ENCODE measurements at regions of chr16 and their contacts with region 1.

Region 1: DNA sequence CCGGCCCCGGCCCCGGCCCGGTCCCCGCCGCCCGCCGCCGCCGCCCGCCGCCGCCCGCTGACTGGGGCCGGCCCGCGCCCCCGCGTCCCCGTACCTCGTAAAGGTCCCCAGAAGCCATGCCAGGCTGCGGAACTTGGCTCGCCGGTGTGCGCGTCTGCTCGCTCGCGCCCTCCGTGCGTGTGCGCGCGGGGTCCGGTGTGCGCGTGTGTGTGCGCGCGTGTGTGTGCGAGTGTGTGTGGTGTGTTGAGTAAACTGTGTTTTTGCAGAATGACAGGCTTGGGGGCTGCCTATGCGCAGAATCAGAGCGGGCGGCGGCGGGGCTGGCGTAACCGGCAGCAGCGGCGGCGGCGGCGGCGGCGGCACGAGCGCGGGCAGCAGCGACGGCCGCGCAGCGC is 345 bp downstream of the CDYL2 start:
- DNase-seq: no peak
- ATAC-seq: no peak
- H3K4me3 ChIP-seq: peak overlapping the region; percentile 47 to 57 (median 54)
- H3K27ac ChIP-seq: no peak overlapping the region
- H3K4me1 ChIP-seq: no peaks in the 10 kb centered on the region
- H3K27me3 ChIP-seq: peaks cover 0 to 17% (median 0%) of the 10 kb centered on the region in 3 donors
- CTCF ChIP-seq: no peak
- POLR2A ChIP-seq: no peak

Region 2: DNA sequence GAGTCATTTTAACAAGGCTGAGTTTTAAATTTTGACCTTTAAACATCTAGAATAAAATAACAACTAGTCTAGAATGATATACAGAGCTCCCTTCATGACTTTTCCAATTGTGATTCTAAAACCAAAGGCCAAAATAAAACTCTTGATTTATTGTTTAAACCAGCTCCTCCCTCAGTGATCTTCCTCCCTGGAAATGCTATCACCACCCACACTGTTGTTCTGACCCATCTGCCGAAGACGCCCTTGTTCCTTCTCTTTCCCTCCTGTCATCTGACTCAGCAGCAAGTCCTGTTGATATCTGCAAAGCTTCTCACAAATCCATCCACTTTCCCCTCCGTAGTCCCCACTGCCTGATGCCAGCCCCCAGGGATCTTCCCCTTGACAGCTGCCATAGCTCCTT is 494.9 kb before region 1 on chr16:
- in situ Hi-C with region 1: no loop called
- intact Hi-C with region 1: no loop called
- DNase-seq: no peak
- ATAC-seq: no peak
- H3K4me3 ChIP-seq: no peak overlapping the region
- H3K27ac ChIP-seq: no peak overlapping the region
- H3K4me1 ChIP-seq: no peaks in the 10 kb centered on the region
- H3K27me3 ChIP-seq: no peaks in the 10 kb centered on the region
- CTCF ChIP-seq: no peak
- POLR2A ChIP-seq: no peak

Region 3: DNA sequence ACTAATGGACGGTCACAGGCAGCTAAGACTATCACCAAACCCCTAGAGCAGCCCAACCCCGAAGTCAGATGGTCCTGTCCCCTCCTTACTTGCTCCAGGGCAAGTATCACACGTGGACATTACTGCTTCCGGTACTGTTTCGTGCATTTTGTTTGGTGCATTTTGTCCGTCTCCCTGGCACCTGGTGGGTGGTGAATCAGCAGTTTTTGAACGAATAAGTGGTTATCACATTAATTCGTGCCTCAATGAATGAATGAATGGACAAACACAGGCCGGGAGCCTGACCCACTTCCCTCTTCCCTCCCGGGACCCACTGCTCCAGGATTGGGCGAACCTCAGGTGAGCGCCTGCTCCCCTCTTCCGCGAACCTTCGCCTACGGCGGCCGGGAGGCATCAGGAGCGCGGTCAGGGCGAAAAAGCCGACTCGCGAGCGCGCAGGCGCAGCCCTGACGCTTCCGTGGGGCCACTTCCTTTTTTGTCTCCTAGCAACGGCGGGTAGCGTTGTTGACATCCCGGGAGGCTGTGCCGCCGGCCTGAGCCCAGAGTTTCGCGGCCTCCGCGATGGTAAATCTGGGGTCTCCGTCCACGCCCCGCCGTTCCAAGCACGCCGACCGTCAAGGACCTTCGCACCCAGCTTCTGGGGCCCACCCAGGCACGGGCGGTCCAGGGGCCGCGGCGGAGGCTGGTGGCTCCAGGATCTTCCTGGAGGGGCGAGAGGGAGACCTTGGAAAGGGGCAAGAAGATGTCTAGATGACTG is 263.4 kb before region 1 on chr16 and contains the start of gene DYNLRB2:
- in situ Hi-C with region 1: no loop called
- intact Hi-C with region 1: loop called (anchors 10 kb)
- DNase-seq: peak; percentile 71 to 84
- ATAC-seq: peak; percentile 91 to 92
- H3K4me3 ChIP-seq: peak within 1 kb of the TSS; percentile 68 to 72 (median 72)
- H3K27ac ChIP-seq: peak within 1 kb of the TSS; percentile 45 to 50 (median 48)
- H3K4me1 ChIP-seq: peaks cover 4 to 6% of the 10 kb centered on the region in 2 donors
- H3K27me3 ChIP-seq: peaks cover 0 to 4% (median 0%) of the 10 kb centered on the region in 3 donors
- CTCF ChIP-seq: no peak
- POLR2A ChIP-seq: no peak
- total RNA-seq, gene DYNLRB2: not detected

Region 4: GRCh38 chr16:80564394-80564793 is 239.7 kb before region 1 on chr16:
- in situ Hi-C with region 1: no loop called
- intact Hi-C with region 1: no loop called
- DNase-seq: no peak
- ATAC-seq: no peak
- H3K4me3 ChIP-seq: no peak overlapping the region
- H3K27ac ChIP-seq: no peak overlapping the region
- H3K4me1 ChIP-seq: no peaks in the 10 kb centered on the region
- H3K27me3 ChIP-seq: peaks cover 0 to 7% (median 0%) of the 10 kb centered on the region in 3 donors
- CTCF ChIP-seq: no peak
- POLR2A ChIP-seq: no peak

Region 5: GRCh38 chr16:80746231-80746630 is 57.8 kb before region 1 on chr16:
- in situ Hi-C with region 1: no loop called
- intact Hi-C with region 1: no loop called
- DNase-seq: no peak
- ATAC-seq: no peak
- H3K4me3 ChIP-seq: no peak overlapping the region
- H3K27ac ChIP-seq: no peak overlapping the region
- H3K4me1 ChIP-seq: no peaks in the 10 kb centered on the region
- H3K27me3 ChIP-seq: no peaks in the 10 kb centered on the region
- CTCF ChIP-seq: no peak
- POLR2A ChIP-seq: no peak

Region 6: GRCh38 chr16:80948886-80949493 is 144.9 kb after region 1 on chr16:
- in situ Hi-C with region 1: no loop called
- intact Hi-C with region 1: no loop called
- DNase-seq: no peak
- ATAC-seq: peak in 1 of 2 donors; percentile 36
- H3K4me3 ChIP-seq: no peak overlapping the region
- H3K27ac ChIP-seq: no peak overlapping the region
- H3K4me1 ChIP-seq: no peaks in the 10 kb centered on the region
- H3K27me3 ChIP-seq: no peaks in the 10 kb centered on the region
- CTCF ChIP-seq: peak in 4 of 5 experiments; percentile 33 to 63 (median 49)
- POLR2A ChIP-seq: no peak